Activated CD4-positive, alpha-beta T cell treated with anti-CD3 and anti-CD28 coated beads for 36 hours (primary cell): ENCODE measurements at regions of chr14 and their contacts with region 1.

Region 1: DNA sequence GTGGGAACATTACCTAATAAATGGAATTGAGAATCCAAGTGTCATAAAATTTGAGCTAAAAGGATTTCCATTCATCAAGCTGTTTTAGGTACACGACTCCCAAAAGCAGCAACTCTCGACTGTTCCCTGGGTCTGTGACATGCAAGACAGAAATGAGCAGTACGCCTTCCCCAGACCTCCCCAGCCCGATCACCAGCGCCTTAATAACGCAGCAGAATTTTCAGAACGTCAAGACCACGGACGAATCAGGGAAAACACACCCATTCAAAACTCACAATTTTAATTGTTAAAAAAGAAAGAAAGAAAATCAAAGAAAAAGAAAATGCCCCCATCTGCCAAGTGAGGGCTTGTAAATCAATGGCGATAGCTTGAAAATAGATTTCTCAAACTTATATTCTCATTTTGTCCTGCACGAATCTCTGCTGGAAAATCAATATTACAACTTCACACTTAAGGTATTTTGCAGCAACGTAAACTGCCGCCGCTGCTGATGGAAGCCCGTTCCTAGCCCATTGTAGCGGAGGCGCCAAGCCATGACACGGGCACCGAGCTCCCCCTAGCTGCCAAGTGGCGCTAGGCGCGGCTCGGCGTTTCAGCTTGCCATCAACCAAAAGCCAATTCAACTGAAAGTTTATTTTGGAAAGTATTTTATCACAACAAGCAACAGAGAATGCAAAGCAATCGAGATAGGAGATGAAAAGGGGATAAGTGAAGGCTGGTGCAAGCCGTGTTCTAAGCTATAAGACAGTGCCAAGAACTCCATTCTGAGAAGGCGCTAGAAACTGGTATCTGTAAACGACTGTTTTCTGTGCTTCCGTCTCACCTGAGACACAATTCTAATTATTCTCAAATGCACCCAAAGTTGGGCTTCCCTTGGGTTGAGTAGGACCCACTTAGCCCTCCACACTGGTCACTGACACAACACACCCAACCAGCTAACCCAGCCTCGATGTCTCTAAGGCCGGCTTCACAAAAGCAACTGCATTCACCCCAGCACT is 5.5 kb downstream of the BCL11B start:
- DNase-seq: peak; percentile 94
- ATAC-seq: peak; percentile 38
- H3K4me3 Mint-ChIP-seq: peak overlapping the region; percentile 87
- H3K27ac Mint-ChIP-seq: peak overlapping the region; percentile 99
- H3K4me1 Mint-ChIP-seq: peaks cover 37% of the 10 kb centered on the region
- H3K27me3 Mint-ChIP-seq: no peaks in the 10 kb centered on the region

Region 2: GRCh38 chr14:97299661-97300060 is 1966.8 kb before region 1 on chr14:
- CTCF ChIA-PET with region 1: no interaction called
- POLR2A ChIA-PET with region 1: no interaction called
- intact Hi-C with region 1: loop called in 1 of 2 experiments (anchors 10 kb)
- DNase-seq: peak; percentile 55
- ATAC-seq: no peak
- H3K4me3 Mint-ChIP-seq: no peak overlapping the region
- H3K27ac Mint-ChIP-seq: no peak overlapping the region
- H3K4me1 Mint-ChIP-seq: peaks cover 6% of the 10 kb centered on the region
- H3K27me3 Mint-ChIP-seq: peaks cover 2% of the 10 kb centered on the region

Region 3: GRCh38 chr14:98931911-98932310 is 334.6 kb before region 1 on chr14:
- CTCF ChIA-PET with region 1: no interaction called
- POLR2A ChIA-PET with region 1: no interaction called
- intact Hi-C with region 1: loop called (anchors 5 kb)
- DNase-seq: peak; percentile 75
- ATAC-seq: peak; percentile 80
- H3K4me3 Mint-ChIP-seq: peak overlapping the region; percentile 45
- H3K27ac Mint-ChIP-seq: peak overlapping the region; percentile 85
- H3K4me1 Mint-ChIP-seq: peaks cover 89% of the 10 kb centered on the region
- H3K27me3 Mint-ChIP-seq: no peaks in the 10 kb centered on the region

Region 4: GRCh38 chr14:99169776-99170356 is 96.6 kb before region 1 on chr14:
- CTCF ChIA-PET with region 1: no interaction called
- POLR2A ChIA-PET with region 1: no interaction called
- intact Hi-C with region 1: no loop called
- DNase-seq: no peak
- ATAC-seq: no peak
- H3K4me3 Mint-ChIP-seq: no peak overlapping the region
- H3K27ac Mint-ChIP-seq: no peak overlapping the region
- H3K4me1 Mint-ChIP-seq: peaks cover 14% of the 10 kb centered on the region
- H3K27me3 Mint-ChIP-seq: no peaks in the 10 kb centered on the region

Region 5: GRCh38 chr14:99192028-99192621 is 74.4 kb before region 1 on chr14:
- CTCF ChIA-PET with region 1: interaction called, 12 read pairs
- POLR2A ChIA-PET with region 1: interaction called, 10 read pairs
- intact Hi-C with region 1: loop called (anchors 1 to 2 kb)
- DNase-seq: no peak
- ATAC-seq: peak; percentile 8
- H3K4me3 Mint-ChIP-seq: peak overlapping the region; percentile 79
- H3K27ac Mint-ChIP-seq: peak overlapping the region; percentile 99
- H3K4me1 Mint-ChIP-seq: peaks cover 89% of the 10 kb centered on the region
- H3K27me3 Mint-ChIP-seq: no peaks in the 10 kb centered on the region

Region 6: DNA sequence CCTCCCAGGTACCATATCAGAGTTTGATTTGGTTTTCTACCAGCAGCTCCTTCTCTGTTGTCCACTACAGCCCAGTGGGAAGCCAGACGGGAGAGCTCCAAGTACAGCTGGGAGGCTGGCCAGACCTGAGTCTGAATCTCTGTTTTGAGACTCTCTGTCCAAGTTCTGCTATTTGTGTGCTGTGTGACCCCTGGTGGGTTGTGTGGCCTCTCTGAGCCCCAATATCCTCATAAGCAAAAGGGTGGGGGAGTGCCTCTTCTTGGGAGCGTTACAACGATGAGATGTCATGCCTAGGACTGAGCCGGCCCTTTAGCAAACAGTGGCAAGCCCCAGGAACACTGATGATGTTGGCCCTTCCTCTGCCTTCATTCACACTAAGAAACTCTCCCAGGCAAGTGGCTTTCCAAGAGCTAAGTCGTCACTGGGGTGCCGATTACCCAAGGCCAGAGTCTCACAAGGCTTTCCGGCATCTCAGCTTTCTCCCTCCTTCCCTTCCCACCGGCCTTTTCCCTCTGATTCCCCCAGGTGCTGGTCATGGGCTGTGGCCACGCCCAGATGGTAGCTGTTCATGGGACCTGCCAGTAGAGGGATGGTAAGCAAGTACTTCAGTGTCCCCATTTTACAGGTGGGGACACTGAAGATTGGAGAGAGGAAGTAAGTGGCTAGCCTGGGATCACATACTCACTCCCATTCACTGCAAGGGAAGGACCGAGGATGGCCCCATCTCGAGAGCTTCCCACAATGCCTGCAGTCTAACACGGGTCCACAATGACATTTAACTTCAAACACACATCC is 42.2 kb before region 1 on chr14:
- CTCF ChIA-PET with region 1: interaction called, 17 read pairs
- POLR2A ChIA-PET with region 1: interaction called, 4 read pairs
- intact Hi-C with region 1: no loop called
- DNase-seq: no peak
- ATAC-seq: peak; percentile 19
- H3K4me3 Mint-ChIP-seq: peak overlapping the region; percentile 43
- H3K27ac Mint-ChIP-seq: peak overlapping the region; percentile 88
- H3K4me1 Mint-ChIP-seq: peaks cover 95% of the 10 kb centered on the region
- H3K27me3 Mint-ChIP-seq: no peaks in the 10 kb centered on the region

Region 7: DNA sequence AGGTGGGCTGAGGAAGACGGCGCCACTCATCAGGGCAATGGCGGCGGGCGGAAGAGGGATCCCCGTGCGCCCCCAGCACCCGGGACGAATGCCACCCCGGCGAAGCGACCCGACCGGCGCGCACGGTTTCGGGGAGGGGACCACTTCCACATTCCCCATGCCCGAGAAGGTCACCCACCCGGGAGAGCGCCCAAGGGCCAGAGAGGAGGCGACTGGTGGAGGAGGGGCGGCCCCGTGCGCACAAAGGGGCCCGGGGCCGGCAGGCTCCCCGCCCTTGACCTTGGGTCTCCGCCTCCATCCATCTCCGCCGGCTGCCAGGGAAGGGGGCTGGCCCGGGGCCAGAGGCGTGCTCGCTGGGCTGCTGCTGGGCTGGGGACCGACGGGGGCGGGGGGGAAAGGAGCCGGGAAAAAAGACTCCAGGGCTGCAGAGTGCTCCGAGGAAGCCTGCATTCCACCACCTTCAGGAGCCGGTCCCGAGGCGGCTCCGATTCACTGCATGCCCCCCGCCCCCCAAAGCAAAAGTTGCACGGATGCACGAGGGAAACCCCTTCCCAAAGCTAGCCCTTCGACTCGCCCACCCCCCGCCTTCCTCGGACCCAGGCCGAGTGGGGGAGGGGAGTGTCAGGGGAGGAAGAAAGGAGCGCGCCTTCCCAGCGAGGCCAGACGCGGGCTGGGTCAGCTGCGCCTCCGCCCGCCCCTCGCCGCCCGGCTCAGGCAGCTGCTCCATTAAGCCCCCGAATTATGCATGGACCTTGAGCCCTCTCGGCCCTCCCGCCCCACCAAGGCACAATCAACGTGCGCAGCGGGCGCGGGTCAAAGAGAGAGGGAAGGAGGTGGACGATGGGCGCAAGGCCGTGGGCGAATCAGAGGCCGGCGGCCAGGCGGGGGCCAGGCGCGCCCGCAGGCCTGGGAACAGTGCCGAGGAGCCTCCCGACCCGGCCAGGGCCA is 20.6 kb before region 1 on chr14:
- CTCF ChIA-PET with region 1: interaction called, 12 read pairs
- POLR2A ChIA-PET with region 1: interaction called, 4 read pairs
- intact Hi-C with region 1: loop called (anchors 1 to 2 kb)
- DNase-seq: peak; percentile 60
- ATAC-seq: no peak
- H3K4me3 Mint-ChIP-seq: peak overlapping the region; percentile 67
- H3K27ac Mint-ChIP-seq: peak overlapping the region; percentile 93
- H3K4me1 Mint-ChIP-seq: peaks cover 81% of the 10 kb centered on the region
- H3K27me3 Mint-ChIP-seq: no peaks in the 10 kb centered on the region